ENCODE measurements at regions of chr10 and their contacts with region 1.

Region 1: DNA sequence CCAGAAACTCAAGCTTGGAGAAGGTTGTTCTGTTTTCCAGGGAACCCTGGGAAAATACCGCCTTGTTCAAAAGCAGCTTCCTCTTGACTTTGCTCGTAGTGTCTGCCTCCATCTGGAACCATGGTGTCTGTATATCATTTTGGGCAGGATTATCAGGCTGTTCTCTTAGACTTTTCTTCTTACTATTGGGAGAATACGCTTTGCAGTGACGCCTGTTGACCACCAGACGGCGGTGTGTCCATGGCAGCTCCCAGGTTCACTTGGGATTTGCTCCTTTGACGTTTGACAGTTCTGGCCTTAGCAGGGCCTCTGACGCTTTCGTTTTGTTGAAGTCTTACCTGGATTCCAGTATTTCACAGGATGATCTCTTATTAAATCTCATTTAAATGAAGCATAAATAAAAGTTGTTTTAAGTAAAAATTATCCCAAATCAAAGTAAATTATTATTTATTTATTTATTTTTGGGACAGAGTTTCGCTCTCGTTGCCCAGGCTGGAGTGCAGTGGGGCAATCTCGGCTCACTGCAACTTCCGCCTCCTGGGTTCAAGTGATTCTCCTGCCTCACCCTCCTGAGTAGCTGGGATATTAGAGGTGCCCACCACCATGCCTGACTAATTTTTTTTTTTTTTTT is 41.8 kb upstream of the GJD4 start:
- DNase-seq: peak; percentile 66
- ATAC-seq: peak; percentile 54
- H3K4me3 ChIP-seq: no peak overlapping the region
- H3K4me3 Mint-ChIP-seq: no peak overlapping the region
- H3K27ac ChIP-seq: no peak overlapping the region
- H3K27ac Mint-ChIP-seq: no peak overlapping the region
- H3K4me1 ChIP-seq: peaks cover 12 to 20% of the 10 kb centered on the region in 2 donors
- H3K4me1 Mint-ChIP-seq: peaks cover 19% of the 10 kb centered on the region
- H3K27me3 ChIP-seq: no peaks in the 10 kb centered on the region
- H3K27me3 Mint-ChIP-seq: no peaks in the 10 kb centered on the region
- CTCF ChIP-seq: peak; percentile 98

Region 2: GRCh38 chr10:35236739-35237138 is 326.6 kb before region 1 on chr10:
- CTCF ChIA-PET with region 1: interaction called, 22 read pairs
- POLR2A ChIA-PET with region 1: no interaction called
- intact Hi-C with region 1: loop called (anchors 2 kb)
- DNase-seq: no peak
- ATAC-seq: no peak
- H3K4me3 ChIP-seq: no peak overlapping the region
- H3K4me3 Mint-ChIP-seq: no peak overlapping the region
- H3K27ac ChIP-seq: no peak overlapping the region
- H3K27ac Mint-ChIP-seq: no peak overlapping the region
- H3K4me1 ChIP-seq: no peaks in the 10 kb centered on the region
- H3K4me1 Mint-ChIP-seq: no peaks in the 10 kb centered on the region
- H3K27me3 ChIP-seq: no peaks in the 10 kb centered on the region
- H3K27me3 Mint-ChIP-seq: no peaks in the 10 kb centered on the region
- CTCF ChIP-seq: no peak

Region 3: GRCh38 chr10:35574924-35575352 is 11.6 kb after region 1 on chr10:
- CTCF ChIA-PET with region 1: interaction called, 12 read pairs
- POLR2A ChIA-PET with region 1: no interaction called
- intact Hi-C with region 1: no loop called
- DNase-seq: no peak
- ATAC-seq: no peak
- H3K4me3 ChIP-seq: no peak overlapping the region
- H3K4me3 Mint-ChIP-seq: no peak overlapping the region
- H3K27ac ChIP-seq: no peak overlapping the region
- H3K27ac Mint-ChIP-seq: no peak overlapping the region
- H3K4me1 ChIP-seq: no peaks in the 10 kb centered on the region
- H3K4me1 Mint-ChIP-seq: no peaks in the 10 kb centered on the region
- H3K27me3 ChIP-seq: no peaks in the 10 kb centered on the region
- H3K27me3 Mint-ChIP-seq: no peaks in the 10 kb centered on the region
- CTCF ChIP-seq: no peak